HEK293 (cell line): ENCODE measurements at regions of chr14 and their contacts with region 1.

Region 1: GRCh38 chr14:53778263-53778662 is 178.4 kb downstream of the BMP4 start:
- H3K4me3 ChIP-seq: no peak overlapping the region
- H3K27ac ChIP-seq: no peak overlapping the region
- H3K4me1 ChIP-seq: peaks cover 2% of the 10 kb centered on the region; the same call in 1 of the 2 replicates
- CTCF ChIP-seq: no peak

Region 2: DNA sequence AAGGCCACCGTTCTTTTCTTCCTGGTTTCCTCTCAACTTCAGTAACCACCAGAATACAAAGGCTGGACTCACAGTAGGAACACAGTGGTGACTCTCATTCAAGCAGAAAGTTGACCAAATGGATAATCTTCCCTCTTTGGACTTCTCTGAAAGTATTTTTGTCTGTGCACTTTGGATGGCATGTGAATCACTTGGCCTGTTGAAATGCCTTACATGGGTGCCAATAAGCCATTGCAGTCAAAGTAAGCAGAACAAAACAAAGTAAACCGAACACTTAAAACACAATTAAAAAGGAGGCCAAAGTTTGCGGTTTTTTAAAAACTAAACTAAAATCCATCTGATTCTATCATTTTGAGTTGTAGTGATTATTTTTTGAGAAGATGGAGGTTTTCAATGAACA is 255.0 kb before region 1 on chr14:
- CTCF ChIA-PET with region 1: interaction called, 10 read pairs
- POLR2A ChIA-PET with region 1: no interaction called
- H3K4me3 ChIP-seq: no peak overlapping the region
- H3K27ac ChIP-seq: no peak overlapping the region
- H3K4me1 ChIP-seq: no peaks in the 10 kb centered on the region
- CTCF ChIP-seq: no peak

Region 3: GRCh38 chr14:53946404-53947096 is 168.3 kb after region 1 on chr14:
- CTCF ChIA-PET with region 1: no interaction called
- POLR2A ChIA-PET with region 1: no interaction called
- H3K4me3 ChIP-seq: no peak overlapping the region
- H3K27ac ChIP-seq: no peak overlapping the region
- H3K4me1 ChIP-seq: peaks cover 20% of the 10 kb centered on the region
- CTCF ChIP-seq: no peak